CD4-positive, alpha-beta T cell (primary cell): ENCODE measurements at regions of chr16 and their contacts with region 1.

Region 1: DNA sequence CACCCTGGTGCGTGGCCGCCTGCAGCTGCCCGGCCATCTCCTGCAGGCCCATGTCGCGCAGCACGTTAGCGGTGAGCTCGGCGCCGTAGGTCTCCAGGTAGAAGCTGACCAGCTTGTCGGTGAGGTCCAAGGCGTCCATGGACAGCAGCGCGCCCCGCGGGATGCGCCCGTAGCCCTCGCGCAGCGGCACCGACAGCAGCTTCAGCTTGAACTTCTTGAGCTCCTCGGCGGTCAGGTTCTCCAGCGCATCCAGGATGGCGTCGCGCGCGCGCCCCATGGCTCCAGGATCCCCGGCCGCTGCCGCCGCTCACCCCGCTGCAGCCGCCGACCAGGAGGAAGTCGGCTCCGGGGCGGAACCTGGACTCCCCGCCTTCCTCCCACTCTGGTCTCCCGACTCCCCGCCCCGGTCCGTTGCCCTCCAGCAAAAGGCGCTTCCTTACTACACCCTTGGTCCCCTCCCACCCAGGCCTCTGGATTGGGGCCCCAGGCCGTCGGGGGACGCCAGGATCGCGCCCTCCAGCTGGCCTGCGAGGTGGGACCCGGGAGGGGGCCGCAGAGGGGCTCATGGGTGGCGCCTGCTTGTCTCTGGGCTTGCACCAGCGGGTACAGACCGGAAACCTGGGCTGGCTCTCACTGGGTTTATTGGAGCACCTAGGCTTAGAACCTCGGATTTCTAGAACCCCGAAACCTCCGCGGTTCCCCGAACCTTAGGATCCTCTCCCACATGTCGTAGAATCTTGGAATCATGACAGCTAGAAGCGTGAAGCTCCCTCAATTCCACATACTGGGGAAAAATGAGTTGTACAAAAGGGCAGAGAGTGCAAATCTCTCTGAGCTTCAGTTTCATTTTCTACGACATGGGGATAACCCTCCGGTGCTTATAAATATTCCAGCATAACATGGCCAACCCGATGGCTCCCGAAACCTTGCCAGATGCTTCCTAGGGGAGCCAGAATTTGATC is at the start of gene PYCARD:
- DNase-seq: peak in 7 of 14 experiments; percentile 24 to 64 (median 43)
- ATAC-seq: peak; percentile 27
- H3K4me3 ChIP-seq: peak within 1 kb of the TSS; percentile 92
- H3K4me3 Mint-ChIP-seq: peak within 1 kb of the TSS; percentile 94
- H3K27ac ChIP-seq: peak within 1 kb of the TSS in 1 of 2 donors; percentile 60
- H3K27ac Mint-ChIP-seq: peak within 1 kb of the TSS; percentile 90
- H3K4me1 ChIP-seq: peaks cover 45% of the 10 kb centered on the region
- H3K4me1 Mint-ChIP-seq: peaks cover 53% of the 10 kb centered on the region
- H3K27me3 ChIP-seq: no peaks in the 10 kb centered on the region
- H3K27me3 Mint-ChIP-seq: no peaks in the 10 kb centered on the region
- CTCF ChIP-seq: no peak
- total RNA-seq, gene PYCARD: 8.1 to 8.5 TPM

Region 2: DNA sequence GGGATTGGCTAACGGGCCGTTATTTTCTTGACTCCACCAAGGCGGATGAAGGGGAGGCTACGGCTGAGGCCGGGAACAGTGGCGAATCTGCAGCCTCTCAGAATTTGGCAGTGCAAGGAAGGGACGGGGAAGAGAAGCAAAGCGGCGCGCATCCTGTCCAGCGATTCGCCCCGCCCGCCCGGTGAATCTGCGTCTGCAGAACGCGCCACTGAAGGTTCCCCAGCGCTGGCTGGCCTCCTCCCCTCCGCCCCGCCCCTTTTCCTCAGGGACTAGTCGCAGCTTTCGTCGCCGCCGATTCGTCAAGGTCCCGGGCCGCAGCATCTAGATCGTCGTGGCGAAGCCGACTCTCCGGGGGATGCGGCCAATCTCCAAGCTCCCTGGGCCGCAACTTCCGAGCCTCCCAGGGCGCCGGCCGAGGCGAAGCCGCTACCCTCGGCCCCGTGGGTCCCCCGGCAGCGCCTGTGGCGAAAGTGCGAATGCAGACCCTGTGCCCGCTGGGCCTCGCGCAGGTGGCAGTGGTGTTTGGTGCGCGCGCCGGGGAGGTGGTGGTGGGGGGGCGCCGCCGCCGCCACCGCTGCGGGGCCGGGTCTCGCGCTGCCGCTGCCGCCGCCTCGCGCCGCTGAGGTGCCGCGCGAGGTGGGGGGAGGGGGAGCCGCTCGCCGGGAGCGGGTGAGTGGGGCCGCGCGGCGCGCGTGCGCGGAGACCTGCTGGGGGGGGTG is 245.1 kb before region 1 on chr16 and contains the start of gene SETD1A:
- CTCF ChIA-PET with region 1: no interaction called
- POLR2A ChIA-PET with region 1: no interaction called
- intact Hi-C with region 1: no loop called
- DNase-seq: peak; percentile 94 to 99 (median 97)
- ATAC-seq: peak; percentile 86
- H3K4me3 ChIP-seq: peak within 1 kb of the TSS; percentile 82
- H3K4me3 Mint-ChIP-seq: peak within 1 kb of the TSS; percentile 97
- H3K27ac ChIP-seq: peak within 1 kb of the TSS; percentile 95
- H3K27ac Mint-ChIP-seq: peak within 1 kb of the TSS; percentile 97
- H3K4me1 ChIP-seq: peaks cover 37% of the 10 kb centered on the region
- H3K4me1 Mint-ChIP-seq: peaks cover 39% of the 10 kb centered on the region
- H3K27me3 ChIP-seq: no peaks in the 10 kb centered on the region
- H3K27me3 Mint-ChIP-seq: no peaks in the 10 kb centered on the region
- CTCF ChIP-seq: no peak
- total RNA-seq, gene SETD1A: 40.1 to 41.2 TPM

Region 3: GRCh38 chr16:31186176-31186575 is 16.5 kb before region 1 on chr16:
- CTCF ChIA-PET with region 1: interaction called, 5 read pairs
- POLR2A ChIA-PET with region 1: interaction called, 89 read pairs
- intact Hi-C with region 1: loop called in 1 of 2 experiments (anchors 1 kb)
- DNase-seq: peak in 1 of 14 experiments; percentile 40
- ATAC-seq: peak; percentile 15
- H3K4me3 ChIP-seq: no peak overlapping the region
- H3K4me3 Mint-ChIP-seq: peak overlapping the region; percentile 63
- H3K27ac ChIP-seq: no peak overlapping the region
- H3K27ac Mint-ChIP-seq: peak overlapping the region; percentile 58
- H3K4me1 ChIP-seq: peaks cover 67% of the 10 kb centered on the region
- H3K4me1 Mint-ChIP-seq: peaks cover 98% of the 10 kb centered on the region
- H3K27me3 ChIP-seq: no peaks in the 10 kb centered on the region
- H3K27me3 Mint-ChIP-seq: no peaks in the 10 kb centered on the region
- CTCF ChIP-seq: no peak

Region 4: GRCh38 chr16:31215287-31216162 is 12.8 kb after region 1 on chr16:
- CTCF ChIA-PET with region 1: no interaction called
- POLR2A ChIA-PET with region 1: interaction called, 24 read pairs
- intact Hi-C with region 1: no loop called
- DNase-seq: peak in 4 of 14 experiments; percentile 16 to 55 (median 35)
- ATAC-seq: peak; percentile 79
- H3K4me3 ChIP-seq: peak overlapping the region; percentile 38
- H3K4me3 Mint-ChIP-seq: peak overlapping the region; percentile 76
- H3K27ac ChIP-seq: no peak overlapping the region
- H3K27ac Mint-ChIP-seq: no peak overlapping the region
- H3K4me1 ChIP-seq: peaks cover 25% of the 10 kb centered on the region
- H3K4me1 Mint-ChIP-seq: peaks cover 16% of the 10 kb centered on the region
- H3K27me3 ChIP-seq: peaks cover 38 to 49% of the 10 kb centered on the region in 2 experiments
- H3K27me3 Mint-ChIP-seq: peaks cover 51% of the 10 kb centered on the region
- CTCF ChIP-seq: no peak

Region 5: DNA sequence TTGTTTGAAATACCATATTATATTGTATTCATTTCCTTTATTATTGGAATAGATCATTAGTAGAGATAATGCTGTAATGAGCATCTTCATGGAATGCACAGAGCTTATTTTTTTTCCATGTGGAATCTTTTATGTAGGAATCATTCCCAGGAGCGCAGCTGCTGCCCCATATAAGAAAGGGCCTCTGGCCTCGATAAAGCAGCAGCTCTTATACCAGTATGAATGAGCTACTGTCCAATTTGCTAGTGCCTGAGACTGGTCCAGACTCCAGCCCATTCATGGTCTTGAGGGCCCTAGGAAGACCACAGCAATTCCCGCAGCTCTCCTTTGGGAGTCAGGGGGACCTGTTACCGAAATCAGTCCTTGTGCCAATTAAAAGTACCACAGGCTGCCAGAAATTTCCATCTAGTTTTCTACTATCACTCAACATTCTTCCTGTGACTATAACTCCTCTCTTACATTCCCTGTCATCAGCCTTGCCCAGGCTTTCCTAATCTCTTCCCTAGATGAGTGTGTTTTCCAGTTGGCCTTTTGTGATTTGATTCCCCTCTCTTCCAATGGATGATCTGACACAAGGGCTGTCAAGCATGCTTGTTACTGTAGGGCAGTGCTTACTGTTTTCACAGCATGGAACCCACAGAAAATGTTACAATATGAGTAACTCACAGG is 238.0 kb after region 1 on chr16:
- CTCF ChIA-PET with region 1: no interaction called
- POLR2A ChIA-PET with region 1: no interaction called
- intact Hi-C with region 1: loop called (anchors 5 to 10 kb)
- DNase-seq: no peak
- ATAC-seq: no peak
- H3K4me3 ChIP-seq: no peak overlapping the region
- H3K4me3 Mint-ChIP-seq: peak overlapping the region; percentile 1
- H3K27ac ChIP-seq: no peak overlapping the region
- H3K27ac Mint-ChIP-seq: no peak overlapping the region
- H3K4me1 ChIP-seq: peaks cover 14% of the 10 kb centered on the region
- H3K4me1 Mint-ChIP-seq: peaks cover 10% of the 10 kb centered on the region
- H3K27me3 ChIP-seq: no peaks in the 10 kb centered on the region
- H3K27me3 Mint-ChIP-seq: no peaks in the 10 kb centered on the region
- CTCF ChIP-seq: no peak

Region 6: GRCh38 chr16:31618130-31618529 is 415.4 kb after region 1 on chr16:
- CTCF ChIA-PET with region 1: no interaction called
- POLR2A ChIA-PET with region 1: no interaction called
- intact Hi-C with region 1: no loop called
- DNase-seq: no peak
- ATAC-seq: no peak
- H3K4me3 ChIP-seq: no peak overlapping the region
- H3K4me3 Mint-ChIP-seq: no peak overlapping the region
- H3K27ac ChIP-seq: no peak overlapping the region
- H3K27ac Mint-ChIP-seq: no peak overlapping the region
- H3K4me1 ChIP-seq: no peaks in the 10 kb centered on the region
- H3K4me1 Mint-ChIP-seq: no peaks in the 10 kb centered on the region
- H3K27me3 ChIP-seq: no peaks in the 10 kb centered on the region
- H3K27me3 Mint-ChIP-seq: no peaks in the 10 kb centered on the region
- CTCF ChIP-seq: no peak